ENCODE measurements at regions of chr2 and their contacts with region 1.

Region 1: DNA sequence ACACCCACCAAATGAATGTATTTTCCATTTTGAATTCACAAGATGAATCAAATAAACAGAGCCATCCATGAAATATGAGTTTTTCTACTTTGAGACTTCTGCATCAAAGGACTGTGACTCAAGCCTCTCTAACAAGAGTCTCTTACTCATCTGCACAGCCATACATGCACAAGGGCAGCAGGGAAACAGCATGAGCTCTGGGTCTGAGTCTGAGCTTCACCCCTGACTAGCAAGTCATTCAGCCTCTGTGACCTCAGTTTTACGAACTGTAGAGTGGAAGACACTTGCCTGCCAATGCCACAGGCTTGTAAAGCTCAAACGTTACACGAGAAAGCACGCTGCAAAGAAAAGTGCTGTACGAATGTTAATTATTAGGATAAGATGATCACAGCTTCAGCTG is 42.9 kb downstream of the MREG start:
- DNase-seq: no peak
- H3K4me3 Mint-ChIP-seq: no peak overlapping the region
- H3K27ac Mint-ChIP-seq: peak overlapping the region; percentile 68
- H3K4me1 Mint-ChIP-seq: peaks cover 39% of the 10 kb centered on the region
- H3K27me3 Mint-ChIP-seq: no peaks in the 10 kb centered on the region

Region 2: GRCh38 chr2:215982080-215982875 is 11.9 kb after region 1 on chr2:
- intact Hi-C with region 1: loop called (anchors 1 kb)
- DNase-seq: no peak
- H3K4me3 Mint-ChIP-seq: no peak overlapping the region
- H3K27ac Mint-ChIP-seq: peak overlapping the region; percentile 64
- H3K4me1 Mint-ChIP-seq: peaks cover 29% of the 10 kb centered on the region
- H3K27me3 Mint-ChIP-seq: no peaks in the 10 kb centered on the region

Region 3: DNA sequence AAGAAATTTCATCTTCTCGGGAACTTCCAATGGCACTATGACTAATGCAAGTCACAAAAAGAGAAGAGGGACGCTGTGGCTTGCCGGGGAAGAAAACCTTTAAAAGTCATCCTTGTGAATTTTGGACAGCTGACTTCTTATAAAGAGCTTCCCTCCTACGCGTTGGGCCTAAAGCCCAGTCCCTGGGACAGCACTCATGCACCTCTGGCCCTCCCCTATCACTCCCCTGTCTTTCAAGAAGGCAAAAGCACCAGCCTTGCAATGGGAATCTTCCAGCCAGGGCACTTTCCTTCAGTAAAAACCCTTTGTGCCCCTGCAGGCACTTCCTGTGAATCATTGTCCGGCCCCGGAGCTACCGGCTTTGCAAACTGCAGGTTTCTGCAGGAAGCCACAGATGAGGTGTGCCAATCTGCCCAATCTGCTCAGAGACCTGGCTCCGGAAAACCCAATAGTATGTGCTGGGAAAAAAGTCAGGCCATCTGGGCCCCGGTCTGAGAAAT is 35.8 kb after region 1 on chr2:
- intact Hi-C with region 1: loop called (anchors 2 kb)
- DNase-seq: peak; percentile 79
- H3K4me3 Mint-ChIP-seq: peak overlapping the region; percentile 74
- H3K27ac Mint-ChIP-seq: peak overlapping the region; percentile 93
- H3K4me1 Mint-ChIP-seq: peaks cover 36% of the 10 kb centered on the region
- H3K27me3 Mint-ChIP-seq: no peaks in the 10 kb centered on the region